Panc1 (cell line): ENCODE measurements at regions of chrX and their contacts with region 1.

Region 1: GRCh38 chrX:119791438-119792231 is at the start of gene RPL39:
- DNase-seq: peak; percentile 61
- ATAC-seq: peak; percentile 98
- H3K4me3 ChIP-seq: peak within 1 kb of the TSS; percentile 89 to 97
- H3K27ac ChIP-seq: peak within 1 kb of the TSS; percentile 89
- H3K4me1 ChIP-seq: peaks cover 16% of the 10 kb centered on the region
- H3K27me3 ChIP-seq: no peaks in the 10 kb centered on the region
- CTCF ChIP-seq: no peak
- total RNA-seq, gene RPL39: 1,882 TPM

Region 2: DNA sequence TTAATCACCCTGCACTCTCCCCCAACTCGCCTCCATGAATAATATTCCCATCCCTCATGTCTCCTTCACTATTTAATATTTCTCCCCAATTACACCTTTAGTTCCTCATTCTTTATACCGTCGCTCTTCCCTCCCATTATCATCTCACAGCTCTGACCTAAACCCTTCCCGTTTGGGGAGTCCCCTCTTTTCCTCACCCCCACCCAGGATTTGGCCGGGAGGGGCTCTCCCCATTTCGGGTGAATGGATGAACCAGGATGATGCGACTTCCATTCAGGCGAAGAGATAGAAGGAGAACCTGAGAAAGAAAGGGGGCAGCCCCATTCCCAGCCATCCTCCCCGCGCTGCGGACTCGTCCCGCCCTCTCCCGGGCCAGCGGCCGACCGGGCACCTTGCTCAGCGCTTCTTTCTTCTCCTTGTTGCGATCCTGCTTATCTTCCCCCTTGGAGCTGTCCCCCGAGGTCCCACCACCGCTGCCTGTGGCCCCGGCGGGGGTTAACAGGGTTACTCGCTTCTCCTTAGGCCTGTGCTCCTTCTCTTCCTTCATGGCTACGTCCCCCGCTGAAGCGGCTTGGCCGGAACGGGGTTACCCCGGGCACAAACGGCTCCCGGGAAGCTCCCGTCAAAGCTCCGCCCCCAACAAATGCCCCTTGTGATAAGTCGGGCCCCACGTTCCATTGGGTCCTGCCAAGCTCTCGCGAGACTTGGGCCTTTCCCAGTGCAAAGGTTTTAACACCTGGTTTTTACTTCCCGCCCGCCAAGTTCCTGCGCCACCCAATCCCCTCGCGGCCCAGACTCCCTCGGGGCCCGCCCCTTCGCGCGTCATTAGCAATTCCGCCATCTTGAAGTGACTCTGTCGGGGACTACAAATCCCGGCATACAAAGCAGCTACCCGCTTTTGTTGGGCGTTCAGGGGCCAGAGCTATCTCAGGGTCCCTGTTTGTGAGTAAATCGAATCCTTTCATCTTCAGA is 61.0 kb after region 1 on chrX and contains the start of gene UPF3B:
- CTCF ChIA-PET with region 1: interaction called, 4 read pairs
- POLR2A ChIA-PET with region 1: interaction called, 10 read pairs
- in situ Hi-C with region 1: no loop called
- intact Hi-C with region 1: no loop called
- DNase-seq: peak; percentile 91
- ATAC-seq: peak; percentile 98
- H3K4me3 ChIP-seq: peak within 1 kb of the TSS; percentile 96 to 100
- H3K27ac ChIP-seq: peak within 1 kb of the TSS; percentile 95
- H3K4me1 ChIP-seq: peaks cover 6% of the 10 kb centered on the region
- H3K27me3 ChIP-seq: no peaks in the 10 kb centered on the region
- CTCF ChIP-seq: no peak
- total RNA-seq, gene UPF3B: 27.8 TPM

Region 3: DNA sequence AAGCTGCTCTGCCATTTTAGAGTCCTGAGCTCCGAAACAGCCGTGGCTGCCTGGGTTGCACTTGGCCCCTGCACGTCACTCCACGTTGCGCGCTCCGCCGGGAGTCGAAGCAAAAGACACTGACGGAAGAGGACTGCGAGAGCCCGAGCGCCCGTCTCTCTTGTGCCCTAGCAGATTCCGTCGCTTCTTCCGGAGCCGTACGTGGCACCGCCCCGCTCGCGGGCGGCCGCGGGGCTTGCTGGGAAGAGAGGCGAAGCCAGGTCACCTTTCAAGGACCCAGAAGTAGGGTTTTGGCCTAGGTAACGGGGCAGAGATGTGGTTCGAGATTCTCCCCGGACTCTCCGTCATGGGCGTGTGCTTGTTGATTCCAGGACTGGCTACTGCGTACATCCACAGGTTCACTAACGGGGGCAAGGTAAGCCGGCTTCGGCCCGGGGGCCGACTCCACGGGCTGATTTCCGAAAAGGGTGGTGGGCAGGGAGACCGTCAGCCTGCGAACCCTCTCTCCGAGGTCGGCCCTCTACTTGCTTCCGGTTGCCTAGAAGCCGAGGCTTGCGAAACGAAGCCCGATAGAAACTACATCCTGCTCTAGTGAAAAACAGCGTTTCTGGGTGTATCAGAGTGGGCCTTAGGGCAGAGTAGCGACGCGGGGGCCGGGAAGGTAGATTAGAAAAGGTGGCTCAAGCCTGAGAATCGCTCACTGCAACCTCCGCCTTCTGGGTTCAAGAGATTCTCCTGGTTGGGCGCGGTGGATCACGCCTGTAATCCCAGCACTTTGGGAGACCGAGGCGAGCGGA is 80.2 kb after region 1 on chrX and contains the starts of genes NDUFA1 and RNF113A:
- CTCF ChIA-PET with region 1: no interaction called
- POLR2A ChIA-PET with region 1: interaction called, 6 read pairs
- in situ Hi-C with region 1: no loop called
- intact Hi-C with region 1: loop called (anchors 5 kb)
- DNase-seq: peak; percentile 70
- ATAC-seq: peak; percentile 99
- H3K4me3 ChIP-seq: peak within 1 kb of the TSS; percentile 81 to 88
- H3K27ac ChIP-seq: peak within 1 kb of the TSS; percentile 88
- H3K4me1 ChIP-seq: peaks cover 12% of the 10 kb centered on the region
- H3K27me3 ChIP-seq: no peaks in the 10 kb centered on the region
- CTCF ChIP-seq: no peak
- total RNA-seq, gene NDUFA1: 252 TPM
- total RNA-seq, gene RNF113A: 23.4 TPM

Region 4: DNA sequence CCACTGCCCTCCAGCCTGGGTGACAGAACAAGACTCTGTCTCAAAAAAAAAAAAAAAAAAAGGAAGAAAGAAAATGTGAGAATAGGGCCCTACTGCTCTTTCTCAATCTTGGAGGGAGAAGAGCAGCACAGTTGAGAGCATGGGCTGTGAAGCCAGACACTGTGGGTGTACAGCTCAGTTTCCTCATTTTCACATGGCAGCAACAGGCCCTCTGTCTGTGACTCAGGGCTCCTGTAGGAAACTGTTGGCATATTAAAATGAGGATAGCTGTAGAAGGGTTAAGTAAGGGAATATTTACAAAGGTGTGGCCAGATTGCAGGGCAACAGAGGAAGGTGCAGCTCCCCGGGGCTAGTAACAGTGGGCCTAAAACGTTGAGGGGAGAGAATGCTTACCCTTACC is 107.5 kb after region 1 on chrX:
- CTCF ChIA-PET with region 1: no interaction called
- POLR2A ChIA-PET with region 1: no interaction called
- in situ Hi-C with region 1: no loop called
- intact Hi-C with region 1: no loop called
- DNase-seq: no peak
- ATAC-seq: peak; percentile 39; the same call in 1 of the 2 replicates
- H3K4me3 ChIP-seq: no peak overlapping the region
- H3K27ac ChIP-seq: no peak overlapping the region
- H3K4me1 ChIP-seq: no peaks in the 10 kb centered on the region
- H3K27me3 ChIP-seq: no peaks in the 10 kb centered on the region
- CTCF ChIP-seq: no peak